BJ (cell line): ENCODE measurements at regions of chr5 and their contacts with region 1.

Region 1: GRCh38 chr5:56270568-56271392 is 37.6 kb upstream of the ANKRD55 start:
- DNase-seq: peak; percentile 56
- H3K4me3 ChIP-seq: no peak overlapping the region
- H3K27me3 ChIP-seq: no peaks in the 10 kb centered on the region
- CTCF ChIP-seq: peak; percentile 100

Region 2: GRCh38 chr5:56140073-56140472 is 130.7 kb before region 1 on chr5:
- CTCF ChIA-PET with region 1: no interaction called
- POLR2A ChIA-PET with region 1: no interaction called
- DNase-seq: no peak
- H3K4me3 ChIP-seq: no peak overlapping the region
- H3K27me3 ChIP-seq: no peaks in the 10 kb centered on the region
- CTCF ChIP-seq: no peak

Region 3: DNA sequence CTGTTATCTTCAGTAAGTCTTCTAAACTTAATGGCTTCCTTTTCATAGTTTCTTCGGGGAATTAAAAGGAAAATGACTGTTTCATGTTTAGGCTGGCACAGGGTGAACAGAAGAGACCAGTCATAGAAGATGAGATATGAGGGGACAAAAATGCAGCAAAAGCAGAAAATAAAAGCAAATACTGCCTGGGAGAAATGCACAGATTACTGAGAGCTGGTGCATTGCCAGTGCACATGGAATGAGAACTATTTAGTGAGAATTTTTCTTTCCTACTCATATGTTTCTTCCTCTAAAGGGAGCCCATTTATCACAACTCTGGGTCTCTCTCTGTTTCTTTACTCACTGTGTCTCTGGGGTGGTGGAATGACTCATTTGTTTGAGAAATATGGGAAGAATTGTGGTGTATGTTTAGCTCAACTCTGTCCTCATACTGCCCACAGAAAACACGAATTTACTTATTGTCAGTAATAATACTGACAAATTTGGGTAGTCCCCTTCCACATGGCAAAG is 11.7 kb before region 1 on chr5:
- CTCF ChIA-PET with region 1: interaction called, 27 read pairs
- POLR2A ChIA-PET with region 1: no interaction called
- DNase-seq: peak; percentile 96
- H3K4me3 ChIP-seq: no peak overlapping the region
- H3K27me3 ChIP-seq: no peaks in the 10 kb centered on the region
- CTCF ChIP-seq: no peak

Region 4: GRCh38 chr5:56294354-56294753 is 23.6 kb after region 1 on chr5:
- CTCF ChIA-PET with region 1: no interaction called
- POLR2A ChIA-PET with region 1: no interaction called
- DNase-seq: no peak
- H3K4me3 ChIP-seq: no peak overlapping the region
- H3K27me3 ChIP-seq: no peaks in the 10 kb centered on the region
- CTCF ChIP-seq: no peak

Region 5: GRCh38 chr5:56415356-56415765 is 144.6 kb after region 1 on chr5:
- CTCF ChIA-PET with region 1: interaction called, 10 read pairs
- POLR2A ChIA-PET with region 1: no interaction called
- DNase-seq: peak; percentile 28
- H3K4me3 ChIP-seq: no peak overlapping the region
- H3K27me3 ChIP-seq: no peaks in the 10 kb centered on the region
- CTCF ChIP-seq: no peak

Region 6: DNA sequence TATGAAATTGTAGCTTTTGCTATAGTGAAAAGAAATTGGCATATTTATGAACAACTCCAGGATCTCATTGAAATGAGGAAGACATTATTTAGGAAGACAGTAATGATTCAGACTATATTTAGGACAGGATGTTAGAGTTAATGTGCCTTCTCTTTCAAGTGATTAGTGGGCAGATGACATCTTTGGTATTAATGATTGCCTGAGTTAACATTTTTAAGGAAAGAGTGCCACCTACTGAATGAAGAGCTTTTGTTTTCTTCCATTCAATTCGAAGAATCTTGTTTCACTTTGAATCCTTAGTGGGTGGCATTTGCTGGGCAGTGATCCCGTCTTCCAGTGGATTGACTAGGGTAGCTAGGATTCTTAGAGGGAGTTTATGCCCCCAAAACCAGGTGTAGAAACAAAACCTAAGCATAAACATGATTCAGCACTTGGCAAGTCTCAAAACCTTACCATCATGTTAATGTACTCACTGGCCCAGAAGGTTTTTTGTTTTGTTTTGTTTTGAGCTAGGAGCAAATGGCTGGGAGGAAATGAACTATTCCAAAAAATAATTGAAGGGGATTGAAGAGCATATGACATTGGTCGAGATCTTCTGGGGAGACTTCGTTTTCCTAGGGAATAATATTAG is 567.7 kb after region 1 on chr5:
- CTCF ChIA-PET with region 1: interaction called, 234 read pairs
- POLR2A ChIA-PET with region 1: no interaction called
- DNase-seq: peak; percentile 51
- H3K4me3 ChIP-seq: 0 out of 2 replicates have a peak overlapping the region, but pooled peaks have one; percentile 12
- H3K27me3 ChIP-seq: no peaks in the 10 kb centered on the region
- CTCF ChIP-seq: peak; percentile 49